ENCODE measurements at regions of chr15 and their contacts with region 1.

Region 1: GRCh38 chr15:40857601-40858341 is 13.9 kb downstream of the SPINT1 start:
- DNase-seq: peak; percentile 72 to 82 (median 73)
- H3K4me3 ChIP-seq: no peak overlapping the region
- H3K4me3 Mint-ChIP-seq: no peak overlapping the region
- H3K27ac ChIP-seq: no peak overlapping the region
- H3K27ac Mint-ChIP-seq: peak overlapping the region in 1 of 7 donors; percentile 12
- H3K4me1 ChIP-seq: peaks cover 12% of the 10 kb centered on the region
- H3K4me1 Mint-ChIP-seq: peaks cover 6 to 20% (median 7%) of the 10 kb centered on the region in 4 donors
- H3K27me3 ChIP-seq: no peaks in the 10 kb centered on the region
- H3K27me3 Mint-ChIP-seq: peaks cover 1 to 4% of the 10 kb centered on the region in 2 donors

Region 2: GRCh38 chr15:40470423-40471104 is 387.2 kb before region 1 on chr15 and contains the start of gene CHST14:
- CTCF ChIA-PET with region 1: no interaction called
- POLR2A ChIA-PET with region 1: no interaction called
- intact Hi-C with region 1: no loop called
- DNase-seq: peak; percentile 42 to 70 (median 58)
- H3K4me3 ChIP-seq: peak within 1 kb of the TSS; percentile 58 to 74
- H3K4me3 Mint-ChIP-seq: peak within 1 kb of the TSS; percentile 87 to 93 (median 90)
- H3K27ac ChIP-seq: peak within 1 kb of the TSS; percentile 70
- H3K27ac Mint-ChIP-seq: peak within 1 kb of the TSS; percentile 87 to 94 (median 90)
- H3K4me1 ChIP-seq: peaks cover 23% of the 10 kb centered on the region
- H3K4me1 Mint-ChIP-seq: peaks cover 12 to 30% (median 22%) of the 10 kb centered on the region in 4 donors
- H3K27me3 ChIP-seq: no peaks in the 10 kb centered on the region
- H3K27me3 Mint-ChIP-seq: no peaks in the 10 kb centered on the region
- total RNA-seq, gene CHST14: 9.1 to 10.5 TPM

Region 3: DNA sequence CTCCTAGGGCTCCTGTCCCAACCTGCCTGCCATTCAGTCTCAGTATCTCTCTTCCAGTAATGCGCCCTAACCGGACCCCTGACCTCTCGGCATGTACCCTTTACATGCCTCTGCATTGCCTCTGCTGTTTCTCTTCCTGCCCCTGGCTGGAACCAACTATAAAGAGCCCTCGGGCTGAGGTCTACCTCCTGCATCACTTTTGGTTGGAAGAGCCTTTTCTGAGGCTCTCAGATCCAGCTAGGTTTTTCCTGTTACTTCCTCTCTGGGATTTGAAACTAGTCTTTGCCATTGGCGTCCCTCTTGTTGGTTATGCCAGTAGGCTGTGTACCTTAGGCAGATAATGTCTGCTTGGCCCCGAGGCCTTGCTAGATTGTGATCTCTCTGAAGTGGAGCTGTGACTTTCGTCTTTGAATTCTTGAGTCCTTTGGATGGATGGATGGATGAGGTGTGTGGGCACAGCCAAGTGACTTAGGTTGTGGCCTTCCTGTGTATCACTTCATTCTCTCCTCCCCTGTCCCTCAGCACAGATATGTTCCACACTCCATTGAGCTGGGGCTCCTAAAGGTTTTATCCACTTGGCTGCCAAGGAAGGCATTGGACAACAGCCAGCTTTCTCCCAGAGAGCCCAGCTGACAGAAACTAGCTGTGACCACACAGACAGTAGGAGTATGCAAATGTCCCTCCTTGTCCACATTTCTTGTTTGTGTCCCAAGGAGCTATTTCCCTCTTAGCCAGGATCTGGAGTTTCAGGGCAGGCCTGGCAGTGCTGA is 42.7 kb before region 1 on chr15:
- CTCF ChIA-PET with region 1: interaction called, 11 read pairs
- POLR2A ChIA-PET with region 1: no interaction called
- intact Hi-C with region 1: no loop called
- DNase-seq: no peak
- H3K4me3 ChIP-seq: no peak overlapping the region
- H3K4me3 Mint-ChIP-seq: no peak overlapping the region
- H3K27ac ChIP-seq: no peak overlapping the region
- H3K27ac Mint-ChIP-seq: no peak overlapping the region
- H3K4me1 ChIP-seq: no peaks in the 10 kb centered on the region
- H3K4me1 Mint-ChIP-seq: no peaks in the 10 kb centered on the region
- H3K27me3 ChIP-seq: no peaks in the 10 kb centered on the region
- H3K27me3 Mint-ChIP-seq: no peaks in the 10 kb centered on the region

Region 4: DNA sequence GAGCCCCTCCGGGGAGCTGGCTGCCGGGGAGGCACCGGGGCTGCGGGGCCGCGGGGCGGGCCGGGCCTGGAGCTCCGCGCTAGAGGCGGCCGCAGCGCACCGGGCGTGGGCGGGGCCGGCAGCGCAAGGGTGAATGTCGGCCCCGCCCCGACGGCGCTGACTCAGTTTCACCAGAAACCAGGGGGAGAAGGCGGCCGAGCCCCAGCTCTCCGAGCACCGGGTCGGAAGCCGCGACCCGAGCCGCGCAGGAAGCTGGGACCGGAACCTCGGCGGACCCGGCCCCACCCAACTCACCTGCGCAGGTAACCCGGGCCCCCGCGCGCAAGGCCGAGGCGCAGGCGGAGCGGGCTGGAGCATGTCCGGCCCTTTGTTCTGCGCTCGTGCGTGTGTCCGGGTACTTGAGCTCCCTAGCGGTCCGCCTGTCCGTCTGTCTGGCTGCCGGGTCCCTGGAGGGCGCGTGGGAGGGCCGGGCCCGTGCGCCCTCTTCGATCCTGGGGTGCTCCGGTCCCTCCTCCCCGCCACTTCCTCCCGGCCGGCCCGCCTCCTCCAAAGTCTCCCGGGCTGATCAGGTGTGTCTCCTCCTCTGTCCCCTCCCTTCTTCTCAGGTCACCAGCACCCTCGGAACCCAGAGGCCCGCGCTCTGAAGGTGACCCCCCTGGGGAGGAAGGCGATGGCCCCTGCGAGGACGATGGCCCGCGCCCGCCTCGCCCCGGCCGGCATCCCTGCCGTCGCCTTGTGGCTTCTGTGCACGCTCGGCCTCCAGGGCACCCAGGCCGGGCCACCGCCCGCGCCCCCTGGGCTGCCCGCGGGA is 13.7 kb before region 1 on chr15 and contains the start of gene SPINT1:
- CTCF ChIA-PET with region 1: interaction called, 24 read pairs
- POLR2A ChIA-PET with region 1: no interaction called
- intact Hi-C with region 1: no loop called
- DNase-seq: peak; percentile 22 to 44 (median 28)
- H3K4me3 ChIP-seq: peak within 1 kb of the TSS; percentile 42 to 63
- H3K4me3 Mint-ChIP-seq: peak within 1 kb of the TSS; percentile 84 to 90 (median 86)
- H3K27ac ChIP-seq: no peak within 1 kb of the TSS
- H3K27ac Mint-ChIP-seq: peak within 1 kb of the TSS; percentile 13 to 85 (median 62)
- H3K4me1 ChIP-seq: peaks cover 35% of the 10 kb centered on the region
- H3K4me1 Mint-ChIP-seq: peaks cover 12 to 39% (median 23%) of the 10 kb centered on the region in 4 donors
- H3K27me3 ChIP-seq: no peaks in the 10 kb centered on the region
- H3K27me3 Mint-ChIP-seq: peaks cover 0 to 2% of the 10 kb centered on the region in 2 donors
- total RNA-seq, gene SPINT1: 3.8 to 4.0 TPM

Region 5: GRCh38 chr15:40881351-40881750 is 23.6 kb after region 1 on chr15:
- CTCF ChIA-PET with region 1: interaction called, 19 read pairs
- POLR2A ChIA-PET with region 1: interaction called, 3 read pairs
- intact Hi-C with region 1: no loop called
- DNase-seq: no peak
- H3K4me3 ChIP-seq: no peak overlapping the region
- H3K4me3 Mint-ChIP-seq: no peak overlapping the region
- H3K27ac ChIP-seq: no peak overlapping the region
- H3K27ac Mint-ChIP-seq: no peak overlapping the region
- H3K4me1 ChIP-seq: peaks cover 13% of the 10 kb centered on the region
- H3K4me1 Mint-ChIP-seq: peaks cover 7 to 12% (median 10%) of the 10 kb centered on the region in 4 donors
- H3K27me3 ChIP-seq: no peaks in the 10 kb centered on the region
- H3K27me3 Mint-ChIP-seq: no peaks in the 10 kb centered on the region

Region 6: DNA sequence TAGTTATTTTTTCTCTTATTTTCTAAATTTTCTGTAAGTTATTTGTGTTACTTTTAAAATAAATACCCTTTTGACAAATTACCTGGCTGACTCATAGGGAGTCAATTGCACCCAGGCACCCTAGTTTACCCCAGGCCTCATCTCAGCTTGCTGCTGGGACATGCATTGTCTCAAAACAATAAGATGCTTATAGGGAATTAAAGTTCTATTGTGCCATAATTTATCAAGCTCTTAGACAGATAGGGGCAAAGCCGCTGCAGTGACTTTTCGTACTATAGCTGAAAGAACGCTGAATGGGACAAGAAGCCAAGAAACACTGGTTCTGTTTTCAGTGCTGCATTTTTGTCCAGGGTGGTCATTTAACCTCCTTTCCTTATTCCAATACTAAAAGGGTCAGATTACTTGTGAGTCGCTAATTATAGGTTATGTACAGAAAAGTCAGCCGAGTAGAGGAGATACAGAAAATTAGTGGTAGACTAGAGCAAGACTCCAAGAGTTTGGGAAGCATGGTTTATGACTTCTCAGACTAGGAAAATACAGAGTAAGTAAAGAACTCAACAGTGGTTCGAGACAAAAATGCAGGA is 322.5 kb after region 1 on chr15:
- CTCF ChIA-PET with region 1: interaction called, 58 read pairs
- POLR2A ChIA-PET with region 1: interaction called, 4 read pairs
- intact Hi-C with region 1: loop called (anchors 1 kb)
- DNase-seq: no peak
- H3K4me3 ChIP-seq: no peak overlapping the region
- H3K4me3 Mint-ChIP-seq: no peak overlapping the region
- H3K27ac ChIP-seq: no peak overlapping the region
- H3K27ac Mint-ChIP-seq: no peak overlapping the region
- H3K4me1 ChIP-seq: no peaks in the 10 kb centered on the region
- H3K4me1 Mint-ChIP-seq: no peaks in the 10 kb centered on the region
- H3K27me3 ChIP-seq: no peaks in the 10 kb centered on the region
- H3K27me3 Mint-ChIP-seq: peaks cover 0 to 2% of the 10 kb centered on the region in 2 donors

Measured in CD4-positive, alpha-beta memory T cell (primary cell).